ENCODE measurements at regions of chr3 and their contacts with region 1.

Region 1: DNA sequence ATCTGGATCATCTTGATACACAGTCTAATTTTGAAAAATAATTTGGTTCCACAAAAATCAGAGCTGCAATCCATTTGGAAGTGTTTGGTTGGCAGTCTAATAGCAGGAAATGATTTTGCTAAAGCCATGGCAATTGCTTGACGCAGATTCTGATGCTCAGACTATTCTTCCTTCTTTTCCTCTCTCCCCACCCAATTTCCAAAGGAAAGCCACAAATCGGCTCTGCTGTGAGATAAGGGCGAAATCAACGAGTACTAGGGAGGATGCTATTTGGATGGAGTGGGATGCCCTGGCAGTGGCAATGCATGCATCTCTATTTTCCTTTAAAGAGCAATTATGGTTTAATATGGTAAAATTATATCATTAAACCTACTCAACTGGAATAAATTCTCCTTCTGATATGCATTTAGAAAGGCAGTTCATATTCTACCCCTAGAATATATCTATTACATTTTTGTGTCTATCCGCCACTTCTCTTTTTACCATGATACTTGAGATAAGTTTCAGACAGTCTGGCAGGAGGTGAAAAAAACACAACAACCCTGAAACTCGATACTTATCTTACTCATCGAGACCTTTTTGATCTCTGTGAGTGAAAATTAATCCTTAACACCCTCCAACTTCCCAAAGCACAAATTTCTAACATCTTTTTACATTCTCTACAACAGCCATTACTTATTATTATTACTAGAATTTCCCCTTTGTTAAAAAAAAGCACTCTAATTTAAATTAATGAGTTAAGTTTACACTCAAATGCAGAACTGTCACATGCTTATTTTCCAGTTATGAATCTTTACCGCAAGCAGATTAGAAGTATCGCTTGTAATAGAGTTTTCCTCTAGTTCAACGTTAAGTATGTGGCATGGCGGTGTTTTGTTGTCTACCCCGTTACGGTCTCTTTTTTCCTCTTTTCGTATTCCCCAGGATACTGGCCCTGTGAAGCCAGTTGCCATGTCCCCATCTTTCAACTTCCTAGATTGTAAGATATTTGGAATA is 433.3 kb downstream of the FOXP1 start:
- DNase-seq: peak in 2 of 9 donors; percentile 22 to 24
- ATAC-seq: peak; percentile 65
- H3K4me3 ChIP-seq: no peak overlapping the region
- H3K4me3 Mint-ChIP-seq: peak overlapping the region in 7 of 10 donors; percentile 15 to 58 (median 45)
- H3K27ac ChIP-seq: peak overlapping the region; percentile 42
- H3K27ac Mint-ChIP-seq: peak overlapping the region in 8 of 9 donors; percentile 40 to 93 (median 86)
- H3K4me1 ChIP-seq: peaks cover 0 to 29% of the 10 kb centered on the region in 2 donors
- H3K4me1 Mint-ChIP-seq: peaks cover 14 to 92% (median 85%) of the 10 kb centered on the region in 7 donors
- H3K27me3 ChIP-seq: no peaks in the 10 kb centered on the region
- H3K27me3 Mint-ChIP-seq: peaks cover 0 to 2% (median 0%) of the 10 kb centered on the region in 5 donors

Region 2: DNA sequence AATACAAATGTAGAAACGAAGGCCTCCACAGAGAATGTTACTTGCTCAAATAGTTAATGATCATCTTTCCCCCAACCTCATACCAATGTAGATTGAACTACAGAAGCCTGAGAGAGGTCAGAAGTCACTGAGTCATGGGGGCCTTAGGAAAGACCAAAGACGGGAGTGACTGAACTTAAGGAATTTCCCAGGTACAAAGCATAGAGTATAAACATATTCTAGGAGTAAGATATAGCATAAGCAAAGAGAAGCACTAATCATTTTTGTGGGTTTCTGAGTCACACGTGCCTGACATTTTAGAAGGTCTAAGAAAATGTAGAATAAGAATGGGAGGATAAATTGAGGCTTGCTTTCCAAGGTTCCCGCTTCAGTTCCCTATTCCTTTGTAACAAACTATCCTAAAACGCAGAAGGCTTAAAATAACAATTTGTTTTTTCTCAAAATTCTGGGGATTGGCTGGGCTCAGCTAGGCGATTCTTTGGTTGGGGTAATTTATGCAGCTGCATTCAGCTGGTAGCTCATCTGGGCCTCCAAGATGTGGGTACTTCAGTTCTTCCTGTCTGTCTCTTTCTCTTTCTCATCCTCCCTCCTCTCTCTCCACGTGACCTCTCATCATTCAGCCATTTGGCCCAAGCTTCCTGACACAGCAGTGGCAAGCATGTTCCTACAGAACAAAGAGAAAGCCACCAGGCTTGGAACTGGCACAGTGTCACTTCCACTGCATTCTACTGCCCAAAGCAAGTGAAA is 10.7 kb after region 1 on chr3:
- CTCF ChIA-PET with region 1: no interaction called
- POLR2A ChIA-PET with region 1: no interaction called
- intact Hi-C with region 1: loop called in 1 of 2 experiments (anchors 1 kb)
- DNase-seq: no peak
- ATAC-seq: no peak
- H3K4me3 ChIP-seq: no peak overlapping the region
- H3K4me3 Mint-ChIP-seq: peak overlapping the region in 6 of 10 donors; percentile 5 to 69 (median 27)
- H3K27ac ChIP-seq: no peak overlapping the region
- H3K27ac Mint-ChIP-seq: peak overlapping the region in 8 of 9 donors; percentile 26 to 87 (median 72)
- H3K4me1 ChIP-seq: peaks cover 0 to 23% of the 10 kb centered on the region in 2 donors
- H3K4me1 Mint-ChIP-seq: peaks cover 6 to 92% (median 84%) of the 10 kb centered on the region in 7 donors
- H3K27me3 ChIP-seq: no peaks in the 10 kb centered on the region
- H3K27me3 Mint-ChIP-seq: no peaks in the 10 kb centered on the region

Region 3: DNA sequence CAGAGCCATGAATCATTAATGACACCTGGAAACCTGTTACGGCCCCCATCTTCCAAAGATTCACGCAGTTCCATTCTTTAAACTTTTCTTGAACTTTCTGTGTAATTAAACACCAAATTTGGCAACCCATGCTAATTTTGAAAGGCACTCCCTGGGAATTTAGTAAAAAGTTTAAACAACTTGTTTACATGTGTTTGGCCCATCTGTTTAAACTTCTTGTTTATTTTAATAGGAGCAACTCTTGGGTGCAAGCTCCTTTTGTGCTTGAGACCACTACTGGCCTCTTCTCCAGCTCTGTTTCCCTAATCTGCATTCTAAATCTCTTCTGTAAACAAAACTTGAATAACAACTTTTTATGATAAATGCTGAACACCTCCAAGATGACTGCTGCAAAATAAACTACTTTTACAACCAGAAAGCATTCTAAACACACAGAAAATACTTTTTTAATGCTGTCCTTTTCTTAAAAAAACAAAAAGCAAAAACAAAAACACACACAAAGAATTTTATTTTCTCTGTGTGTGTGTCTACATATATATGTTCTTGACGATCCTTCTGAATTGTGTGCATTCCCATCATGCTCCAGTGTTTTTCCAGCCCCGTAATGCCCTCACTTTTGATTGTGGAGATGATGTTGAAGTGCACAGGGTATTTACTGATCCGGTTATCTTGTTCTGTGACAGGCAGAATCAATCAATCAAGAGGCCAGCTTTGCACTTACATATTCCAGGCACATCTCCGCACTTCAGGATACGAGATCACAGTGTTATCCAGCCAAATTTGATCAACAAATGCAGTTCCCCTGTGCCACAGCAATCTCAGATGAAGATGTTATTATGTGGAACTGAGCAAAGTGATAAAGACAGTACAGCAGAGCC is 16.3 kb after region 1 on chr3:
- CTCF ChIA-PET with region 1: no interaction called
- POLR2A ChIA-PET with region 1: no interaction called
- intact Hi-C with region 1: loop called in 1 of 2 experiments (anchors 1 kb)
- DNase-seq: no peak
- ATAC-seq: no peak
- H3K4me3 ChIP-seq: no peak overlapping the region
- H3K4me3 Mint-ChIP-seq: peak overlapping the region in 2 of 10 donors; percentile 35 to 48
- H3K27ac ChIP-seq: no peak overlapping the region
- H3K27ac Mint-ChIP-seq: peak overlapping the region in 8 of 9 donors; percentile 26 to 87 (median 60)
- H3K4me1 ChIP-seq: peaks cover 0 to 6% of the 10 kb centered on the region in 2 donors
- H3K4me1 Mint-ChIP-seq: peaks cover 3 to 82% (median 67%) of the 10 kb centered on the region in 7 donors
- H3K27me3 ChIP-seq: no peaks in the 10 kb centered on the region
- H3K27me3 Mint-ChIP-seq: no peaks in the 10 kb centered on the region